Activated T-helper 1 cell treated with anti-CD3 and anti-CD28 coated beads, Interleukin-12 subunit alpha, Interleukin-12 subunit beta, Interleukin-2, Interleukin-4 antibody, amounts not matched to agents 30 ng/mL and 10 ng/mL and 1 ng/mL, durations not matched to agents 14 hours and 24 hours and 36 hours (primary cell): ENCODE measurements at regions of chr3 and their contacts with region 1.

Region 1: GRCh38 chr3:128655531-128655930 is 4.9 kb upstream of the RPN1 start:
- DNase-seq: no peak
- H3K4me3 Mint-ChIP-seq: no peak overlapping the region
- H3K27ac Mint-ChIP-seq: no peak overlapping the region
- H3K4me1 Mint-ChIP-seq: peaks cover 7% of the 10 kb centered on the region
- H3K27me3 Mint-ChIP-seq: no peaks in the 10 kb centered on the region

Region 2: DNA sequence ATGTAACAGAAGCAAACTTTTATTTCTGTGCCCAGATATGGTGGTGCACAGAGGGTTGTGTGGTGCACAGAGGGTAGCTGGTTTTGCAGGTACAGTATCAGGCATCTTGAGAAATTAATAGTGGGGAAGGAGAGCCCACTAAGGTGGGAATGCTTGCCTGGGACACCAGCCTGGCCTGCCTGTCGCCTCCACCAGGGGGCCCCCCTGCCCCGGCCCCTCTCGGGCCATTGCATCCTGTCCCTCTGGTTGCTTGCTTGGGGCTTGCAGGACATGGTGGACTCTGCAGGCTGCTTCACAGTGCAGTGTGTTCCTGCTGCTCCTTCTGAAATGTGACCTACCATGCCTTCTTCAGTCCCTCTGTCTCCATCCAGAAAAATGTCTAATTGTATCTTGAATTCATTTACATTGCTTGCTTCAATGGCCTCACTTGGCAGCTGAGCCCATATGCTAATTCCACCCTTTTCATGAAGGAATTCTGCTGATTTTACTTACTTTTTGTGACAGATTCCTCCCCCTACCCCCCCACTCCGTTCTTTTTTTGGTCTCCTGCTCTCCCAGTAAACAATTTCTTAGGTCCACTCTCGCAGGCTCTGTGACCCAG is 428.6 kb before region 1 on chr3:
- intact Hi-C with region 1: no loop called
- DNase-seq: no peak
- H3K4me3 Mint-ChIP-seq: no peak overlapping the region
- H3K27ac Mint-ChIP-seq: no peak overlapping the region
- H3K4me1 Mint-ChIP-seq: no peaks in the 10 kb centered on the region
- H3K27me3 Mint-ChIP-seq: no peaks in the 10 kb centered on the region

Region 3: DNA sequence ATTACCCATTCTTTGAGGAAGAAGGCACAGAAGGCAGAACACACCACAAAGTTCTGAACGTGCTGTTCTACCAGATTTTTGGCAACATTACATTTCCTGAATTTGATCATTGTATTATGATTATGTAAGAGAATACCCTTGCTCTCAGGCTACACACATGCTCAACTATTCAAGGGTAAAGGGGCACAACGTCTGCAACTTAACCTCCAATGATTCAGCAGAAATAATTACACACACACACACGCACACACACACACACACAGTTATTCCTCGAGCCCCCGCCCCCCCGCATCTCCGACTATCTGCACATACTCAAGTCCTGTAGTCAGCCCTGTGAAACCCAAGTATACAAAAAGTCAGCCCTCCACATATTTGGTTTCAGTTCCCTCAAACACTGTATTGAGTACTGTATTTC is 31.8 kb before region 1 on chr3:
- intact Hi-C with region 1: loop called (anchors 1 kb)
- DNase-seq: no peak
- H3K4me3 Mint-ChIP-seq: no peak overlapping the region
- H3K27ac Mint-ChIP-seq: no peak overlapping the region
- H3K4me1 Mint-ChIP-seq: peaks cover 32% of the 10 kb centered on the region
- H3K27me3 Mint-ChIP-seq: no peaks in the 10 kb centered on the region